CD4-positive, alpha-beta T cell (primary cell): ENCODE measurements at regions of chrX and their contacts with region 1.

Region 1: GRCh38 chrX:40108959-40109287 is 11.2 kb upstream of the BCOR start:
- DNase-seq: peak in 12 of 14 experiments; percentile 40 to 86 (median 66)
- ATAC-seq: peak; percentile 43
- H3K4me3 ChIP-seq: peak overlapping the region; percentile 42
- H3K4me3 Mint-ChIP-seq: no peak overlapping the region
- H3K27ac ChIP-seq: no peak overlapping the region
- H3K27ac Mint-ChIP-seq: no peak overlapping the region
- H3K4me1 ChIP-seq: peaks cover 32% of the 10 kb centered on the region
- H3K4me1 Mint-ChIP-seq: peaks cover 4% of the 10 kb centered on the region
- H3K27me3 ChIP-seq: peaks cover 0 to 1% of the 10 kb centered on the region in 2 experiments
- H3K27me3 Mint-ChIP-seq: no peaks in the 10 kb centered on the region
- CTCF ChIP-seq: no peak

Region 2: DNA sequence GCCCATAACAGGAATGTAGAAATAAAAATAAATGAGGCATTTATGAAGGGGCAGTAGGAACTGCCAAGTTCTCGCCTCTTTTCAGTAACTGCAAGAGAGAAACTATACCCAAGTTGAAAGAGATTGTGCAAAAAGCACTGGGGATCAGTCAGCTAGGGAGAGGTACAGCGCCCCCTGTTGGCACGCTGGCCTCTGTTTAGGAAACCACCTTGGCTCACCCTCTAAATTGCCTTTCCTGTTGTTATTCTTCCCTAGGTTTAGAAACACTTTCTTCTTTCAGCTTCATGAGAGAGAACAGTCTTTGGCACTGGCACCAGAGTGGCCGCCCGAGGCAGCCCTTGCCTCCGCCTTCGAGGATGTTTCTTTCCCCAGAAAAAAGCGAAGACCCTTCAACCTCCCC is 959.2 kb before region 1 on chrX:
- CTCF ChIA-PET with region 1: no interaction called
- POLR2A ChIA-PET with region 1: no interaction called
- intact Hi-C with region 1: no loop called
- DNase-seq: peak; percentile 39 to 74 (median 50)
- ATAC-seq: no peak
- H3K4me3 ChIP-seq: no peak overlapping the region
- H3K4me3 Mint-ChIP-seq: no peak overlapping the region
- H3K27ac ChIP-seq: no peak overlapping the region
- H3K27ac Mint-ChIP-seq: no peak overlapping the region
- H3K4me1 ChIP-seq: no peaks in the 10 kb centered on the region
- H3K4me1 Mint-ChIP-seq: peaks cover 3% of the 10 kb centered on the region
- H3K27me3 ChIP-seq: no peaks in the 10 kb centered on the region
- H3K27me3 Mint-ChIP-seq: no peaks in the 10 kb centered on the region
- CTCF ChIP-seq: peak; percentile 66

Region 3: GRCh38 chrX:39967344-39967743 is 141.6 kb before region 1 on chrX:
- CTCF ChIA-PET with region 1: no interaction called
- POLR2A ChIA-PET with region 1: no interaction called
- intact Hi-C with region 1: no loop called
- DNase-seq: no peak
- ATAC-seq: no peak
- H3K4me3 ChIP-seq: no peak overlapping the region
- H3K4me3 Mint-ChIP-seq: no peak overlapping the region
- H3K27ac ChIP-seq: no peak overlapping the region
- H3K27ac Mint-ChIP-seq: no peak overlapping the region
- H3K4me1 ChIP-seq: peaks cover 22% of the 10 kb centered on the region
- H3K4me1 Mint-ChIP-seq: peaks cover 21% of the 10 kb centered on the region
- H3K27me3 ChIP-seq: no peaks in the 10 kb centered on the region
- H3K27me3 Mint-ChIP-seq: no peaks in the 10 kb centered on the region
- CTCF ChIP-seq: no peak

Region 4: GRCh38 chrX:40146262-40147125 is 37.6 kb after region 1 on chrX:
- CTCF ChIA-PET with region 1: no interaction called
- POLR2A ChIA-PET with region 1: interaction called, 3 read pairs
- intact Hi-C with region 1: loop called in 1 of 2 experiments (anchors 5 kb)
- DNase-seq: peak in 5 of 14 experiments; percentile 30 to 72 (median 57)
- ATAC-seq: peak; percentile 86
- H3K4me3 ChIP-seq: peak overlapping the region; percentile 52
- H3K4me3 Mint-ChIP-seq: peak overlapping the region; percentile 68
- H3K27ac ChIP-seq: no peak overlapping the region
- H3K27ac Mint-ChIP-seq: no peak overlapping the region
- H3K4me1 ChIP-seq: peaks cover 28% of the 10 kb centered on the region
- H3K4me1 Mint-ChIP-seq: no peaks in the 10 kb centered on the region
- H3K27me3 ChIP-seq: no peaks in the 10 kb centered on the region
- H3K27me3 Mint-ChIP-seq: no peaks in the 10 kb centered on the region
- CTCF ChIP-seq: no peak

Region 5: DNA sequence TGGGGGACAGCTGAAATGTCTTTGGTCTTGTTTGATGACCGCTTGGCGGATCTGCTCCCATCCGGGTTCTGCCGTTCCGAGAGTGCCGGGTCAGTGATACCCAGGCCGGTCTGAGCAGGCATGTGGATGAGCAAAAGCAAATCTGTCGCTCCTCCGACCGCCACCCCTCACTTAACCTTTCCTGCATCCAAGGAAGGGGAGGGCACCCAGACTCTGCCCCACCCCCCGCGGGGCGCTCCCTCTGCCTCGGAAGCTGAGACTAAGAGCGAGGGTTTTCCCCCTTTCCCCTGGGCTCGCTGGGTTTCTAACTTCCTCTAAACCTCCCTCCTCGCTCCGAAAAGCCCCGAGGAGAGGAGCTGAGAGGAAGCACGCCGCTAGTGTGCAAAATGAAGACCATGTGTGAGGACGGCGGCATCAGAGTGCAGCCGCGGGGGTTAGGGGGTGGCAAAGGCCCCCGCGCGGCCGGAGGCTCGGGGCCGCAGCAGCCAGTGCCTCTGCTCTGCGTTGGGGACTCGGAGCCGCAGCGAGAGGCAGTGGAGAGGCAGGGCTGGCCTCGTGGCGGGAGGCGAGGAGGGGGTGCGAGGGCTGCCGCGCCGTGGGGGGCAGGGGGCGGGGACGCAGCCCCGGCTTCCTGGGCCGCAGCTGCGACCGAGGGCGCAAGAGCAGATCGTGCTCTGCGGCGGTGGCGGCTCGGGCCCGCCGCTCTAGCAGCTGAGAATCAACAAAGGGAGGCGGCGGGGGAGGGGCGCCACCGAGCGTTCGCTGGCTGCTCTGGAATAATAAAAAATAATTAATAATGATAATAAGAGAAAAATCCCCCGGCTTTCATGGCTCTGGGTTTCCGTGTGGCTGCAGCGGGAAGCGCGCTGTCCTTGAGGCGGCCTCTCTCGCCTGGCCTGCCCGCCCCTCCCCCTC is 44.7 kb after region 1 on chrX:
- CTCF ChIA-PET with region 1: interaction called, 5 read pairs
- POLR2A ChIA-PET with region 1: interaction called, 11 read pairs
- intact Hi-C with region 1: loop called in 1 of 2 experiments (anchors 5 kb)
- DNase-seq: peak in 9 of 14 experiments; percentile 37 to 85 (median 57)
- ATAC-seq: peak; percentile 62
- H3K4me3 ChIP-seq: peak overlapping the region; percentile 55
- H3K4me3 Mint-ChIP-seq: peak overlapping the region; percentile 92
- H3K27ac ChIP-seq: no peak overlapping the region
- H3K27ac Mint-ChIP-seq: peak overlapping the region; percentile 55
- H3K4me1 ChIP-seq: peaks cover 44% of the 10 kb centered on the region
- H3K4me1 Mint-ChIP-seq: peaks cover 11% of the 10 kb centered on the region
- H3K27me3 ChIP-seq: no peaks in the 10 kb centered on the region
- H3K27me3 Mint-ChIP-seq: no peaks in the 10 kb centered on the region
- CTCF ChIP-seq: no peak

Region 6: GRCh38 chrX:40622479-40623138 is 513.7 kb after region 1 on chrX:
- CTCF ChIA-PET with region 1: no interaction called
- POLR2A ChIA-PET with region 1: no interaction called
- intact Hi-C with region 1: no loop called
- DNase-seq: no peak
- ATAC-seq: no peak
- H3K4me3 ChIP-seq: no peak overlapping the region
- H3K4me3 Mint-ChIP-seq: no peak overlapping the region
- H3K27ac ChIP-seq: no peak overlapping the region
- H3K27ac Mint-ChIP-seq: no peak overlapping the region
- H3K4me1 ChIP-seq: no peaks in the 10 kb centered on the region
- H3K4me1 Mint-ChIP-seq: no peaks in the 10 kb centered on the region
- H3K27me3 ChIP-seq: no peaks in the 10 kb centered on the region
- H3K27me3 Mint-ChIP-seq: no peaks in the 10 kb centered on the region
- CTCF ChIP-seq: no peak